ENCODE measurements at regions of chr11 and their contacts with region 1.

Region 1: GRCh38 chr11:112588252-112588694 is 327.6 kb upstream of the PLET1 start:
- DNase-seq: peak; percentile 74
- H3K4me3 ChIP-seq: no peak overlapping the region
- H3K27ac ChIP-seq: no peak overlapping the region
- H3K4me1 ChIP-seq: no peaks in the 10 kb centered on the region
- H3K27me3 ChIP-seq: no peaks in the 10 kb centered on the region
- CTCF ChIP-seq: peak; percentile 52 to 73

Region 2: GRCh38 chr11:112219476-112220232 is 368.6 kb before region 1 on chr11:
- CTCF ChIA-PET with region 1: interaction called, 3 read pairs
- dilution Hi-C with region 1: no loop called
- in situ Hi-C with region 1: no loop called
- intact Hi-C with region 1: loop called (anchors 5 kb)
- DNase-seq: peak; percentile 53
- H3K4me3 ChIP-seq: no peak overlapping the region
- H3K27ac ChIP-seq: no peak overlapping the region
- H3K4me1 ChIP-seq: peaks cover 6% of the 10 kb centered on the region
- H3K27me3 ChIP-seq: no peaks in the 10 kb centered on the region
- CTCF ChIP-seq: peak; percentile 63 to 64

Region 3: DNA sequence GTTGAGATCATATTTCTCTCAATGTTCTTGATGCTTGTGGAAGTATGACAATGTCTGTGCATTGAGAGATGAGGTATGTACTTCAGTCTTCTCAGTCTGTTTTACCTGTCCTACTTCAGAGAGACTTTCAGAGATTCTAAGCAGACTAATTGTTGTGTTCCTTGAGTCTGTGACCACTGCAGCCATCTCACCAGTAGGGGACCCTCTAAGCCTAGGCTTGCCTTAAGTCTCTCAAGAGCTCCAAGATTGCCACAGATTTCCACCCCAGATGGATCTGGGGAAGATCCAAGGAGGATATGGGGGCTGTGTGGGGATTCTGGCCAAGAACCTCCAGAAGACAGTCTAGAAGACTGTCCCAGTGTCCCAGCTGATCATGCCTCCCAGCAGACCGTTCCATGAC is 147.8 kb before region 1 on chr11:
- CTCF ChIA-PET with region 1: no interaction called
- dilution Hi-C with region 1: no loop called
- in situ Hi-C with region 1: no loop called
- intact Hi-C with region 1: loop called (anchors 1 kb)
- DNase-seq: peak; percentile 19
- H3K4me3 ChIP-seq: no peak overlapping the region
- H3K27ac ChIP-seq: no peak overlapping the region
- H3K4me1 ChIP-seq: no peaks in the 10 kb centered on the region
- H3K27me3 ChIP-seq: peaks cover 10% of the 10 kb centered on the region
- CTCF ChIP-seq: peak; percentile 44 to 45

Region 4: GRCh38 chr11:112533682-112534081 is 54.6 kb before region 1 on chr11:
- CTCF ChIA-PET with region 1: no interaction called
- dilution Hi-C with region 1: no loop called
- in situ Hi-C with region 1: no loop called
- intact Hi-C with region 1: no loop called
- DNase-seq: no peak
- H3K4me3 ChIP-seq: no peak overlapping the region
- H3K27ac ChIP-seq: no peak overlapping the region
- H3K4me1 ChIP-seq: peaks cover 7% of the 10 kb centered on the region
- H3K27me3 ChIP-seq: no peaks in the 10 kb centered on the region
- CTCF ChIP-seq: no peak

Region 5: GRCh38 chr11:112724496-112724790 is 136.2 kb after region 1 on chr11:
- CTCF ChIA-PET with region 1: no interaction called
- dilution Hi-C with region 1: no loop called
- in situ Hi-C with region 1: no loop called
- intact Hi-C with region 1: no loop called
- DNase-seq: no peak
- H3K4me3 ChIP-seq: no peak overlapping the region
- H3K27ac ChIP-seq: no peak overlapping the region
- H3K4me1 ChIP-seq: no peaks in the 10 kb centered on the region
- H3K27me3 ChIP-seq: peaks cover 1% of the 10 kb centered on the region
- CTCF ChIP-seq: no peak

Region 6: DNA sequence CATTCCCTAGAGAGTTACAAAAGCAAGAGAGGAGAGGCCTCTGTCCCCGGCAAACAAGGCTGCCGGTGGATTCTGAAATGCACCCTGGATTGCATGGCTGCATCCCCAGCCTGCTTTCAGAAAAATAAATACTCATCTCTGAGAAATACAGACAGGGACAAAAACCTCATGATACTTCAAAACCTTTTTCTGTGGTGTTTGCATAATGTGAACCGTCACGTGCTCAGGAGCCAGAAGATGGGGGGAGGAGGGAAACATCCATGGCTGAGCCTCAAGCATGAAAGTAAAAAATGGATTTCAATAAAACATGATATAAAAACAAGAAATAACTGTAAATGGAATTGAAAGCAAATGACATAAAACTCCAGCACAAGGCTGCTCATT is 174.4 kb after region 1 on chr11:
- CTCF ChIA-PET with region 1: no interaction called
- dilution Hi-C with region 1: no loop called
- in situ Hi-C with region 1: no loop called
- intact Hi-C with region 1: no loop called
- DNase-seq: no peak
- H3K4me3 ChIP-seq: no peak overlapping the region
- H3K27ac ChIP-seq: no peak overlapping the region
- H3K4me1 ChIP-seq: no peaks in the 10 kb centered on the region
- H3K27me3 ChIP-seq: peaks cover 3% of the 10 kb centered on the region
- CTCF ChIP-seq: no peak

Region 7: GRCh38 chr11:112961146-112961668 is 372.9 kb after region 1 on chr11 and contains the start of gene NCAM1:
- CTCF ChIA-PET with region 1: no interaction called
- dilution Hi-C with region 1: no loop called
- in situ Hi-C with region 1: no loop called
- intact Hi-C with region 1: loop called (anchors 10 kb)
- DNase-seq: peak; percentile 61
- H3K4me3 ChIP-seq: peak within 1 kb of the TSS; percentile 38 to 42 (median 40)
- H3K27ac ChIP-seq: no peak within 1 kb of the TSS
- H3K4me1 ChIP-seq: peaks cover 18% of the 10 kb centered on the region
- H3K27me3 ChIP-seq: peaks cover 39% of the 10 kb centered on the region
- CTCF ChIP-seq: no peak
- total RNA-seq, gene NCAM1: 0.17 TPM in 1 of 2 donors, not detected in the other

Region 8: DNA sequence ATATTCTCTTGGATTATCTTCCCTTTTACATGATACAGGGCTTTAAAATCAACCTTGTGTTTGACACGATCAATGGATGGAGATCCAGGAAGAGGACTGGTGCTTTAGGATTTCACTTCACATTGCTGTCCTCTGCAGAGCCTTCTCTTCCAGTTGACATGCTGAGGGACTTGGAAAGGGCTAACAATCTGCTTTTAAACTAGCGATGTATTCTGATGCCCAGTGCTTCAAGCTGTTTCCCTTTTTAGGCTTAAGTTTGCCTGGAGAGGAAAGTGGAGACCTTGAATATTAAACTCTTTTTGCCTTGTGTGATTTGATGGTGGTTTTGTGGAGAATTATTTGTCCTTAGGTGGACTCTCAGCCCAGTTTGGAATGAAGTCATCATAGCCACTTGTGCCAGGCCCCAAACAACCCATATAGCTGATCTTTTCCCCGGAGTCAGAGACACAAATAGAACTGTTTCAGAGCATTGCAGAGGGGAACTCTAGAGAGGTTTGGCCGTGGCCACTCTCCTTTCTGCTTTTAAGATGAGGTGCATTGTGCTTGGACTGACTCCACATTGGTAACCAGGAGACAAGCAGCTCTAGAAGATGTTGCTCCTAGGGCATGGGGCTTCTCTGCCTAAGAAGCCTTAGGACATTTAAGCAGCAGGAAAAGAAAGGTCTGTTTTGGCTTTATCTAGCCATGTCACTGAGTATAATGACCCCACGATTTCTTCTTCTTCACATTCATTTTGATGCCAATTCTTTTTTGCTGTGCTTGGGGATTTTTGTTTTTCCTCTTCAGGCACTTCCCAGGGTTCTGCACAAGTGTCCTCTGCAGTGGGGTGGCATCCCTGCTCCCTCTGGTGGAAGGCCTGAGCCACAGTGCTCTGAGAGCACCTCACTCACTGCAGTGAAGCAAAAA is 525.8 kb after region 1 on chr11:
- CTCF ChIA-PET with region 1: interaction called, 4 read pairs
- dilution Hi-C with region 1: no loop called
- in situ Hi-C with region 1: loop called (anchors 10 kb)
- intact Hi-C with region 1: loop called (anchors 1 kb)
- DNase-seq: peak; percentile 49
- H3K4me3 ChIP-seq: no peak overlapping the region
- H3K27ac ChIP-seq: no peak overlapping the region
- H3K4me1 ChIP-seq: no peaks in the 10 kb centered on the region
- H3K27me3 ChIP-seq: peaks cover 7% of the 10 kb centered on the region
- CTCF ChIP-seq: peak; percentile 76 to 93